ENCODE measurements at regions of chr10 and their contacts with region 1.

Region 1: GRCh38 chr10:99532687-99533495 is at the start of gene NKX2-3:
- DNase-seq: no peak
- ATAC-seq: no peak
- H3K4me3 Mint-ChIP-seq: peak within 1 kb of the TSS; percentile 78
- H3K27ac Mint-ChIP-seq: no peak within 1 kb of the TSS
- H3K4me1 Mint-ChIP-seq: peaks cover 71% of the 10 kb centered on the region
- H3K27me3 Mint-ChIP-seq: peaks cover 80% of the 10 kb centered on the region
- CTCF ChIP-seq: no peak
- total RNA-seq, gene NKX2-3: not detected in 2 replicates

Region 2: GRCh38 chr10:99234041-99234790 is 298.7 kb before region 1 on chr10:
- CTCF ChIA-PET with region 1: no interaction called
- POLR2A ChIA-PET with region 1: no interaction called
- intact Hi-C with region 1: loop called (anchors 5 kb)
- DNase-seq: peak; percentile 65
- ATAC-seq: peak; percentile 94
- H3K4me3 Mint-ChIP-seq: peak overlapping the region; percentile 52
- H3K27ac Mint-ChIP-seq: peak overlapping the region; percentile 24
- H3K4me1 Mint-ChIP-seq: peaks cover 32% of the 10 kb centered on the region
- H3K27me3 Mint-ChIP-seq: peaks cover 63% of the 10 kb centered on the region
- CTCF ChIP-seq: no peak

Region 3: DNA sequence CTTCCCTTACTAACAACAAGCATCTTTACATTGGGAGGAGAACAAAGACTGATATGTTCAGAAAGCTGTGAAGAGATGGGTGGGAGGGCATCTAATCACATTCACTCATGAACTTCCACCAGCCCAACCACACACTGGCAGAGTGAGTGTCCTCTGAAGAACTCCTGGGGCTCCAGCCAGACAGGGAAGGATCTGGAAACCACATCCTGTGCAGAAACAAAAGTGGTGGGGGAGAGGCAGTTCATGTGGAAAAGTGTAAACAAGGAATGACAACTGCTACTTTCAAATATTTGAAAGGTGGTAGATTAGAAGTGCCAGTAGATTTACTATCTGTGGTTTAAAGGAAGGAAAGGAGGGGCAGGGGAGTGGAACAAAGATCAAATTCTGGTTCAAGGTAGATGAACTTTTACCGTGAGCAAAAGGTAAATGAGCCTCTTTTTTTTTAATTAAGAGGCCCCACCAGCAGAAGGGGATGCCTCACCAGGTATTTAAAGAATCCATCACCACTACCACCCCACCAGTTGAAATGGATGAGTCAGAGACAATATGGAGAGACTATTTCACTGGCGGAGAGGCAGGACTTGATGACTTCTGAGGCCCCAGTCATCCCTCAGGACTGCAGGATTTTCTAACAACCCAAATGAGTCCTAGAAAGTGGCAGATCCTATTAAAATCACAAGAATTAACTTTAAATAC is 137.0 kb before region 1 on chr10:
- CTCF ChIA-PET with region 1: no interaction called
- POLR2A ChIA-PET with region 1: no interaction called
- intact Hi-C with region 1: loop called (anchors 10 kb)
- DNase-seq: no peak
- ATAC-seq: no peak
- H3K4me3 Mint-ChIP-seq: no peak overlapping the region
- H3K27ac Mint-ChIP-seq: no peak overlapping the region
- H3K4me1 Mint-ChIP-seq: no peaks in the 10 kb centered on the region
- H3K27me3 Mint-ChIP-seq: peaks cover 2% of the 10 kb centered on the region
- CTCF ChIP-seq: no peak

Region 4: DNA sequence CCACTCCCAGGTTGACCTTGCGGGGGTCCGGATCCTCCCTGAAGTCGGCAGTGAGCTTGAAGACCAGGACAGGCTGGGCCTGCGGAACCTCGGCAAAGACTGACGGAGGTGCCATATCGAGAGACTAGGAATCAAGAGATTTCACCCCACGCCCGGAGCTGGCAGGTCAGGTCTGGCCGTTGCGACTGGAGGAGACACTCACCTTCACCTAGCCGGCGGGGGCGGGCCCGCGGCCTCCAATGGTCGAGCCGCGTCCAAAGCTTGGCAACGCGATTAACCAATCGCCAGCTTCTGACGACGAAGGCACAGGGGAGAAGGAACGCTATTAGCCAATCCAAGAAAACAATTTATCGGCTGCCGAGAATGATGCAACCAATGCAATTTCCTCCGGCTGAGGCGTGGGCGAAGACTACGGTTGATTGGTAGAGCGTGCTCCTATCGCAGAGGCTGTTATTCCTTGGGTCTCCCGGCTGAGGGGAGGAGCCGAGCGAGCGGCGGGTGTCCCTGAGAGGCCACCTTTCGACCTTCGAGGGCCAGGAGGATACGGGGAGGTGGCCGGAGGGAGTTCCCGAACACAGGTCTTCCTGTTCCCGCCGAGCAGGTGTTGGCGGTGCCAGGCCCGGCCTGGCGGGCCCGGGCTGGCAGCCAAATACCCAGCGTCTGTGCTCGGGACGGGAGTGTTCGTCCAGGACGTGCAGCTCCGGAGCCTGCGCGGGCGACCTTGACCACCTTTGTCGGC is 102.3 kb before region 1 on chr10 and contains the start of gene GOT1:
- CTCF ChIA-PET with region 1: no interaction called
- POLR2A ChIA-PET with region 1: interaction called, 3 read pairs
- intact Hi-C with region 1: loop called (anchors 2 kb)
- DNase-seq: peak; percentile 85
- ATAC-seq: peak; percentile 91
- H3K4me3 Mint-ChIP-seq: peak within 1 kb of the TSS; percentile 98
- H3K27ac Mint-ChIP-seq: peak within 1 kb of the TSS; percentile 92
- H3K4me1 Mint-ChIP-seq: peaks cover 29% of the 10 kb centered on the region
- H3K27me3 Mint-ChIP-seq: no peaks in the 10 kb centered on the region
- CTCF ChIP-seq: no peak
- total RNA-seq, gene GOT1: 30.1 and 31.4 TPM in 2 replicates

Region 5: GRCh38 chr10:99906470-99906869 is 373.6 kb after region 1 on chr10:
- CTCF ChIA-PET with region 1: no interaction called
- POLR2A ChIA-PET with region 1: no interaction called
- intact Hi-C with region 1: no loop called
- DNase-seq: no peak
- ATAC-seq: no peak
- H3K4me3 Mint-ChIP-seq: no peak overlapping the region
- H3K27ac Mint-ChIP-seq: no peak overlapping the region
- H3K4me1 Mint-ChIP-seq: no peaks in the 10 kb centered on the region
- H3K27me3 Mint-ChIP-seq: no peaks in the 10 kb centered on the region
- CTCF ChIP-seq: no peak

Region 6: GRCh38 chr10:100653957-100654781 is 1121.3 kb after region 1 on chr10:
- CTCF ChIA-PET with region 1: no interaction called
- POLR2A ChIA-PET with region 1: no interaction called
- intact Hi-C with region 1: loop called (anchors 5 kb)
- DNase-seq: no peak
- ATAC-seq: peak; percentile 28
- H3K4me3 Mint-ChIP-seq: peak overlapping the region; percentile 70
- H3K27ac Mint-ChIP-seq: no peak overlapping the region
- H3K4me1 Mint-ChIP-seq: peaks cover 25% of the 10 kb centered on the region
- H3K27me3 Mint-ChIP-seq: peaks cover 62% of the 10 kb centered on the region
- CTCF ChIP-seq: no peak

Region 7: DNA sequence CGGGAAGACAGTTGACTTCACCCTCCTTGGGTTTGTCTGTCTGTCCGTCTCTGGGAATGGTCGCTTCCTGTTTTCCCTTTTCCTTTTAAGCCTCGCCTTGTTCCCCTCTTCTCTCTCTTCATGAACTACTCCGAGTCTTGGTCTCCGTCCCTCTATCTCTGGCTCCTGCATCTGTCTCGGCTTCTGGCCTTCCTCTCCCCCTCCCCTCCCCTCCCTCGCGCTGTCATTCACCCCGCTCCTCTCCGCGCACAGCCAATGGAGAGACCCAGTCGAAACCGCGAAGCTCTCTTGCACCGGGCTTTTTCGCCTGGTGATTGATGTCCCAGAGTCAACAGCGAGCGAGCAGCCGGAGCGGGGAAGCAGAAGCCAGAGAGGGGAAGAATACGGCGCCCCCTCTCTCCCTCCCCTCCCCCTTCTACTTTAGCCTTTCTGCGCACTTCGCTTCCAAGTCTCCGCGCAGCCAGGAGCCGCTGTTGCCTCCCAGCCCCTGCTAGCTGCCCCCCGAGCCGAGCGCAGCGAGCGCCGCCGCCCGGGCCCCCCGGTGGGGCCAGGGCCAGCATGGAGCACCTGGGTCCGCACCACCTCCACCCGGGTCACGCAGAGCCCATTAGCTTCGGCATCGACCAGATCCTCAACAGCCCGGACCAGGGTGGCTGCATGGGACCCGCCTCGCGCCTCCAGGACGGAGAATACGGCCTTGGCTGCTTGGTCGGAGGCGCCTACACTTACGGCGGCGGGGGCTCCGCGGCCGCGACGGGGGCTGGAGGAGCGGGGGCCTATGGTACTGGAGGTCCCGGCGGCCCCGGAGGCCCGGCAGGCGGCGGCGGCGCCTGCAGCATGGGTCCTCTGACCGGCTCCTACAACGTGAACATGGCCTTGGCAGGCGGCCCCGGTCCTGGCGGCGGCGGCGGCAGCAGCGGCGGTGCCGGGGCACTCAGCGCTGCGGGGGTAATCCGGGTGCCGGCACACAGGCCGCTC is 1598.4 kb after region 1 on chr10 and contains the start of gene TLX1:
- CTCF ChIA-PET with region 1: no interaction called
- POLR2A ChIA-PET with region 1: no interaction called
- intact Hi-C with region 1: loop called (anchors 10 kb)
- DNase-seq: peak; percentile 23
- ATAC-seq: no peak
- H3K4me3 Mint-ChIP-seq: peak within 1 kb of the TSS; percentile 41
- H3K27ac Mint-ChIP-seq: no peak within 1 kb of the TSS
- H3K4me1 Mint-ChIP-seq: peaks cover 40% of the 10 kb centered on the region
- H3K27me3 Mint-ChIP-seq: peaks cover 73% of the 10 kb centered on the region
- CTCF ChIP-seq: no peak
- total RNA-seq, gene TLX1: not detected in 2 replicates

Region 8: DNA sequence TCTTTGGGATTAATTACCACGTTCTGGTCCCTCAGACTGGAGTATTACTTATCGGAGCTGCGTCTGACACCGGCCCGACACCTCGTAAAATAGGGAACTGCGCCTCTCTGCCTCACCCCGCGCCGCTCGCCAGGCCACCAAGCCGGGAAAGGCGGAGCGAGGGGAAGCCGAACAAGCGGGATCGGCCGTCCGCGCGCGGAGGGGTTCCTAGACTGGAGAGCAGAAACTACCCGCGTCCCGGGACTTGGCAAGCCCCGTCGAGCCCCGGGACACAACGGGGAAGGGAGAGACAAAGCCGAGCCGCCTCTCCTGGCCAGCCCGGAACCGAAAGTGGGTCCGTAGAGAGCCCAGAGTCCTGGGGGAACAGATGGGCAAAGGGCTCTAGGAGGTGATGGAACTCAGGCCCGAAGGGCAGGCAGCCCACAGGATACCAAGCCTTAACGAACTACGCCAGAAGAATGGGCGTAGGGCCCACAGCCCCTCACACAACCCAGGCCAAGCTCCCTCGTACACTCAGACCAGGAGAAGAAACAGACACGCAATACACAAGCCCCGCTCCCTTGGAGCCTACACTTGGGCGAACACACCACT is 1689.9 kb after region 1 on chr10:
- CTCF ChIA-PET with region 1: no interaction called
- POLR2A ChIA-PET with region 1: no interaction called
- intact Hi-C with region 1: loop called (anchors 5 kb)
- DNase-seq: no peak
- ATAC-seq: peak; percentile 25
- H3K4me3 Mint-ChIP-seq: peak overlapping the region; percentile 70
- H3K27ac Mint-ChIP-seq: no peak overlapping the region
- H3K4me1 Mint-ChIP-seq: peaks cover 43% of the 10 kb centered on the region
- H3K27me3 Mint-ChIP-seq: peaks cover 73% of the 10 kb centered on the region
- CTCF ChIP-seq: no peak

Measured in activated B cell treated with CpG ODN at 0.5 μM for 24 hours (primary cell).